ENCODE measurements at regions of chr4 and their contacts with region 1.

Region 1: GRCh38 chr4:152640058-152640833 is 39.6 kb downstream of the TMEM154 start:
- DNase-seq: no peak
- H3K4me3 Mint-ChIP-seq: no peak overlapping the region
- H3K27ac Mint-ChIP-seq: no peak overlapping the region
- H3K4me1 Mint-ChIP-seq: peaks cover 42% of the 10 kb centered on the region
- H3K27me3 Mint-ChIP-seq: no peaks in the 10 kb centered on the region

Region 2: GRCh38 chr4:151715881-151716280 is 924.4 kb before region 1 on chr4:
- intact Hi-C with region 1: no loop called
- DNase-seq: no peak
- H3K4me3 Mint-ChIP-seq: no peak overlapping the region
- H3K27ac Mint-ChIP-seq: no peak overlapping the region
- H3K4me1 Mint-ChIP-seq: no peaks in the 10 kb centered on the region
- H3K27me3 Mint-ChIP-seq: no peaks in the 10 kb centered on the region

Region 3: DNA sequence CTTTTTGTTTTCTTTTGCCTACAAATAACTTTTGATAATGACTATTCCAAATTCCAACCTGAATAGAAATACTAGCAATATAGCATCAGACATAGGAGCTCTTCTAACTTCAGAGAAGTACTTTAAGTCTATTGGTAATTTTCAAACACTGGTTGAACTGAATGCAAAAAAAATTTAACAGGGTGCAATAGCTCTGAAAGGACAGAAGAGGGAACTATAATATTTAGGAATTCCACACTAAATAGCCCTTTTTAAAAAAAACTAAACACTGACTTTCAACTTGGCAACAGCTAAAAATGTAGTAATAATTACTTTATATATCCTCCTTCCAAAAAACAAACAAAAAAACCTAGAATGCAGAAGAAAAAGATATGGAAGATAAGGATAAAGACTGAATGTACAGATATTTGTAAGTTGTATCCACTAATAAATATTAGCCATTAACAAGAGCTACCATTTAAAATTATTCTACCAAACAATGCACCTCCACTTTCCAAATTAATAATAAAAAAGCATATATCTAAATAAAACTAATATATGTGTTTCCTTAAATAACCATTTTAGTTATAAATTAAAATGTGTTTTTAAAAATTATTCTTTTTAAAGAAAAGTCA is 185.7 kb before region 1 on chr4:
- intact Hi-C with region 1: loop called (anchors 1 kb)
- DNase-seq: no peak
- H3K4me3 Mint-ChIP-seq: no peak overlapping the region
- H3K27ac Mint-ChIP-seq: no peak overlapping the region
- H3K4me1 Mint-ChIP-seq: peaks cover 34% of the 10 kb centered on the region
- H3K27me3 Mint-ChIP-seq: no peaks in the 10 kb centered on the region

Region 4: DNA sequence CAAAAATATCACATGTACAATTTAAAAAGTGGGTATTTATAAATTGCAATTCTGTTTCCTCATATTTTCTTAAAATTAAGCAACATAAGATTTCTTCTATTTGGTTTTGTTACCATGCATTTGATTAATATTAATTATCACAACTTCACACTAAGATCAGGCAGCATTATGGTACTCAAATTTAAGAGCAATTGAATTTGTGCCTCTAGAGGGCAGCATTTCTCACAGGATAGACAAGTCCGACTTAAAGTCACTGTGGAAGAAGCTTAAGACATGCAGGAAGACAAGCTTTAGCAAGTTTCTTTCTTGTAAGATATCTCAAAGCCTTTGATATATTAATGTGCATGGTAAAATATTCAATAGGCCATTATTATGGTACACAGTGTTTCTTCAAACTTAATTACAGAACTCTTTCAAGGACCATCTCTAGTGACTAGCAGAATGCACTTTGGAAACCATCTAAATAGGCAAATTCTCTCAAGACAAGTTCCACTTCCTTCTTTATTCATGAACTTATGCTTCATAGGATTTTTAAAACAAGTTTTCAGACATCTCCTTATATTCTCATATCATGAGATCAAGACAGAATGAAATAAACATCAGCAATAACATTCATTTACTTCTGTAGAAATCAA is 139.3 kb before region 1 on chr4:
- intact Hi-C with region 1: loop called (anchors 1 kb)
- DNase-seq: peak; percentile 56
- H3K4me3 Mint-ChIP-seq: no peak overlapping the region
- H3K27ac Mint-ChIP-seq: no peak overlapping the region
- H3K4me1 Mint-ChIP-seq: peaks cover 27% of the 10 kb centered on the region
- H3K27me3 Mint-ChIP-seq: no peaks in the 10 kb centered on the region

Region 5: DNA sequence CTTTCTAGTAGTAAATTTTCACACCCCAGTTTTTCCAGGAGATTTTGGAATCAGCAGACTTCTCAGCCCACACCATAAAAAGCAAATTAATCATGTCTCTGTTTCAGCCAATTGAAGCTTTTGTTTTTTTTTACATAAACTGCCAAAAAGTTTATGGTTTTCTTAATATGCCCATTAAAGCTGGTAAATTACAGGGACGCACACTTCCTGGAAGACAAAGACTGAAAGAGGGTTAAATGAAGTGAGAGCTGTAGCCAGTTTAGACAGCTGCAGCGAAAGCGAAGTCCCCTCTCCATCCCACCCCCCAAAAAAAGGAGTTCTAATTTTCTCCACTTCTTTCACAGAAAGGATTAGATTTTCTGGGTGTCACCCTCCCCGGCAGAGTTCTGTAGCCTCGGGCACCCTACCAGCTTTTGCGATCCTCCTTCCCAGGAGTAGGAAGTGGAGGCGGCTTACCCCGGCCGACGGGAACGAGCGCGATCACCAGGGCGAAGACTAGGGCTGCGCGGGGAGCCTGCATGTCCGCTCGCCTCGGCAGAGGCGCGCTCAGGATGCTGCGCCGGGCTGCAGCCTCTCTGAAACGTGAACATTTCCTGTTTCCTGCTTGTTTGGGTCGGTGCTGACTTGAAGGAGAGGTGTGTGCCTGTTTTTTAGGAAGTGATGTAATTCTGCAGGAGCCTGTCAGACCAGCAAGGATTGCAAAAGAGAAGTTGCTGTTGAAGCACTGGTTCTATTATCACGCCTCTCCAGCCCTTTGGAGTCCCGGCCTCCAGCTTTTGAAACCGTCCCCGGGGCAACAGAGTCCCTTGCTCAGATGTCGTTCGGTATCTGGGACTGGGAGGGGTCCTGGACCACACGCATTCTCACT is 39.4 kb after region 1 on chr4 and contains the start of gene TMEM154:
- intact Hi-C with region 1: loop called (anchors 2 kb)
- DNase-seq: peak; percentile 77
- H3K4me3 Mint-ChIP-seq: peak within 1 kb of the TSS; percentile 91
- H3K27ac Mint-ChIP-seq: peak within 1 kb of the TSS; percentile 92
- H3K4me1 Mint-ChIP-seq: peaks cover 84% of the 10 kb centered on the region
- H3K27me3 Mint-ChIP-seq: no peaks in the 10 kb centered on the region
- total RNA-seq, gene TMEM154: 13.0 and 13.3 TPM in 2 replicates